Right ventricle myocardium superior (tissue), 1 donor: ENCODE measurements at regions of chr2 and their contacts with region 1.

Region 1: DNA sequence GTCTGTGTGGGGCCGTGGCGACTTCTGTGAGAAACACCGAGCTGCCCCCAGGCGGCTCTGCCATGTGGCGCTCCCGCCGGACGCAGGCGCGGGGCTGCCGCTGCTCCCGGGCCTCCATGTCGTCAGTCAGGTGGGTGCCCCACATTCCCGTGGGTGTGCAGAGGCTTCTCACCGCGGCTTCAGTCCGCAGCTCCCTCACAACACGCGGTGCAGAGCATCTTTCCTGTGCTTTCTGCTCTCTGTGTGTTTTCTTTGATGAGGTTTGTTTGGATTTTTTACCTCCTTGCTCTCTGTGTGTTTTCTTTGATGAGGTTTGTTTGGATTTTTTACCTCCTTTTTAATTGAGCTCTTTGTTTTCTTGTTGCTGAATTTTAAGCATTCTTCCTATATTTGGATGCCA is 13.0 kb downstream of the AQP12A start:
- DNase-seq: peak; percentile 14
- ATAC-seq: no peak

Region 2: DNA sequence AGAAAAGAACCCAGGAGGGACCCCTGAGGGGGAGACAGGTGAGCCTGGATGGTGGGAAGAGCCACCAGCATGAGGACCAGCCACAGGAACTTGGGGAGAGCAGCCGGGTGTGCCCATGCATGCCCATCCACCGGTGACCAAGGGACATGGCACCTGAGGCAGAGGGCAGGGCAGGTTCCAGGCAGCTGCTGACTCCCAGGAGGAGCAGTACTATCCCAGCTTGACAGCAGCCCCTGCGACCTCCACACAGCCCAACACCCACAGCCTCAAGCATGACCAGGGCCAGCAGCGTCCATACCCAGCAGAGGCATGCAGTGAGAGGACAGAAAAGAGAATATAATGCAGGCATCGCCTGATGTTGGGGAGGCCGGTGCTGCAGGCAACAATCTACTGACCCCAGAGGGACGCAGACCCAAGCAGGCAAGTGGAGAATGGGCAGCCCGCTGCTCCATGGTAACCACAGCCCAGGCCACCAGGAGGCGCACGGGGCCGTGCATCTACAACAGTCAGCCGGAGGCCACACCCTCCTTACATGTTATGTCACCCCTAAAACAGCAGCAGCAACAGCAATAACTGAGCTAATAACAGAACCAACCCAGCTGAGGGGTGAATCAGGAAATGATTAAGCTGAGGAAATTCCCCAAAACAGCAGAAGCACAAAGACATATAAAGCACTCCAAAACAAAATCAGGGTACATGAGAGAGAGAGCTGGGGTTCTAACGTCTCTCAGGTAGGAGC is 190.9 kb before region 1 on chr2:
- intact Hi-C with region 1: loop called (anchors 5 kb)
- DNase-seq: peak; percentile 94
- ATAC-seq: peak; percentile 98